Activated CD8-positive, alpha-beta memory T cell treated with anti-CD3 and anti-CD28 coated beads, Interleukin-2, amount 10 ng/mL, durations not matched to agents 7 days and 5 days (primary cell): ENCODE measurements at regions of chr1 and their contacts with region 1.

Region 1: DNA sequence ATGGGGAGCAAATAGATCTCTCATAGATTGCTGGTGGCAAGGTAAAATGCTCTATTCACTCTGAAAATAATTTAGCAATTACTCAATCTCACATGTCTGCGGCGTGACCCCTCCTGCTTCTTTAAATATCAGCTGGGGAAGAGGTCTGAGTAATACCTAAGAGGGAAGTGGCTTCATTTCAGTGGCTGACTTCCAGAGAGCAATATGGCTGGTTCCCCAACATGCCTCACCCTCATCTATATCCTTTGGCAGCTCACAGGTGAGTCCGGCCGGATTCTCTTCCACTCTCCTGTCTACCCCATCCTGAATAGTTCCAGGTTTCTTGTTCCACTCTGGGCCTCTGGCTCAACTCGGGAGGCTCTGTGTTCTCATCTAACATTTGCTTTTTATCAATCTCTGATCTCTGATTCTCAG is at the start of gene SLAMF7:
- DNase-seq: peak; percentile 81
- ATAC-seq: peak; percentile 69
- H3K4me3 Mint-ChIP-seq: peak within 1 kb of the TSS; percentile 82
- H3K27ac Mint-ChIP-seq: peak within 1 kb of the TSS; percentile 86
- H3K4me1 Mint-ChIP-seq: peaks cover 67% of the 10 kb centered on the region
- H3K27me3 Mint-ChIP-seq: no peaks in the 10 kb centered on the region
- total RNA-seq, gene SLAMF7: 107 to 126 TPM

Region 2: DNA sequence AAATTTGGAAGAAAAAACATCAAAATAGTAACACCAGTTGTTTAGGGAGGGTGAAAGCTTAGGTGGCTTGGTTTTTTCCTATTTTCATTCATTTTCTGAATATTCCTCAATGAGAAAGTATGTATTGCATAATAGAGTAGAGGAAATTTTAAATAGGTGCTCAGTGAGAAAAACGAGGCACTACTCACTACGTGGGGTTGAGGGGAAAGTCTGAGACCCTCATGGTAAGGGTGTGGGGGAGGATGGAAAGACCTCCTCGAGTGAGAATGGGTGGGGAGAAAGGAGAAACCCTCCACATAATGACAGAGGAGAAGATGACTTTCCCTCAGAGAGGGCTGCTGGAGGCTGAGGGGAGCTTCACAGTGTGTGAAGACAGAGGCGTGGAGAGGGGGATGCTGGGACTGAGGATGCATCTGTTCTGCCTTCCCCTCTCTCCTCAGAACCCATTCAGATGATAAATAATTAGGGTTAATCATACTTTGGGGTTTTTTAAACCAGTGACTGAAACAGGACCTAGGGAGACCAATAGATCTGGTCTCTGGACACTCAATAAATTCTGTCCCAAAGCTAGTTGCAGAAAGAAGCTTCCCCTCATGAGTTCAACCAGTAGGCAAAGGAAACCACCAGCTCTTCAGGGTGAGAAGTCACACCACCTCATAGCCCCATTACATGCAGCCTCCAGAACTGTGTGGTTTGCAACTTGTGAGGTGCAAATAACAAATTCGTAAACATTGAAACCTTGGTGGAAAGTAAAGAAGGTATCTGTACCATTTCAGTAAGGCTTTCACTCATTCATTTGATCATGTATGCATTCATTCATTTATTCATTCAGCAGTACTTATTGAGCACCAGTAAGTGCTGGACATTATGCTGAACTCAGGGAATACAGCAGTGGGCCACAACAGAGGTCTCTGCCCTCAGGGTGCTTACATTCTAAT is 17.1 kb after region 1 on chr1:
- CTCF ChIA-PET with region 1: interaction called, 19 read pairs
- DNase-seq: peak; percentile 84
- ATAC-seq: peak; percentile 83
- H3K4me3 Mint-ChIP-seq: peak overlapping the region; percentile 25
- H3K27ac Mint-ChIP-seq: peak overlapping the region; percentile 94
- H3K4me1 Mint-ChIP-seq: peaks cover 61% of the 10 kb centered on the region
- H3K27me3 Mint-ChIP-seq: no peaks in the 10 kb centered on the region

Region 3: GRCh38 chr1:160813215-160813614 is 74.1 kb after region 1 on chr1:
- CTCF ChIA-PET with region 1: no interaction called
- DNase-seq: no peak
- ATAC-seq: peak; percentile 75
- H3K4me3 Mint-ChIP-seq: no peak overlapping the region
- H3K27ac Mint-ChIP-seq: no peak overlapping the region
- H3K4me1 Mint-ChIP-seq: peaks cover 13% of the 10 kb centered on the region
- H3K27me3 Mint-ChIP-seq: no peaks in the 10 kb centered on the region